Sigmoid colon (tissue), 7 donors: ENCODE measurements at regions of chr22 and their contacts with region 1.

Region 1: GRCh38 chr22:39003165-39003638 is 10.9 kb upstream of the APOBEC3C start:
- DNase-seq: peak; percentile 86
- H3K4me3 ChIP-seq: no peak overlapping the region
- H3K27ac ChIP-seq: no peak overlapping the region
- H3K4me1 ChIP-seq: peaks cover 0 to 8% (median 2%) of the 10 kb centered on the region in 4 donors
- H3K27me3 ChIP-seq: no peaks in the 10 kb centered on the region
- CTCF ChIP-seq: peak; percentile 53 to 80 (median 70)
- EP300 ChIP-seq: no peak
- POLR2A ChIP-seq: no peak

Region 2: DNA sequence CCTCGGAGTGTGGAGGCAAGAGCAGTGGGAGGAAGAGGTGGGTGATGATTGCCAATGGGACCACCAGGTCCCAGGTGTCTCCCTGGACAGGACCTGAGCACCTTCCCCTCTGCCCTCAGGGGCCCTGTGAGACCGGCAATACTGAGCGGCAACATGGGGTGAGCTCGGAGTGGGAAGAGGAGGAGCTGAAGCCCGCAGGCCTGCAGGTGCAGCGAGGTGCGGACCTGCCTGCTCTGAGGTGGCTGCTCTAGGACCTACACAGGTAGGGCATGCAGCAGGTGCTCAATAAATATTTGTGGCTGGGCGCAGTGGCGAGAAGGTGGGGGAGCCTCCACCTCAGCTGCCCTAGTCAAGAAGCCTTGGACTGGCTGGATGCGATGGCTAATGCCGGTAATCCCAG is 235.2 kb before region 1 on chr22:
- intact Hi-C with region 1: loop called (anchors 2 kb)
- DNase-seq: no peak
- H3K4me3 ChIP-seq: no peak overlapping the region
- H3K27ac ChIP-seq: no peak overlapping the region
- H3K4me1 ChIP-seq: no peaks in the 10 kb centered on the region
- H3K27me3 ChIP-seq: no peaks in the 10 kb centered on the region
- CTCF ChIP-seq: no peak
- EP300 ChIP-seq: no peak
- POLR2A ChIP-seq: no peak

Region 3: DNA sequence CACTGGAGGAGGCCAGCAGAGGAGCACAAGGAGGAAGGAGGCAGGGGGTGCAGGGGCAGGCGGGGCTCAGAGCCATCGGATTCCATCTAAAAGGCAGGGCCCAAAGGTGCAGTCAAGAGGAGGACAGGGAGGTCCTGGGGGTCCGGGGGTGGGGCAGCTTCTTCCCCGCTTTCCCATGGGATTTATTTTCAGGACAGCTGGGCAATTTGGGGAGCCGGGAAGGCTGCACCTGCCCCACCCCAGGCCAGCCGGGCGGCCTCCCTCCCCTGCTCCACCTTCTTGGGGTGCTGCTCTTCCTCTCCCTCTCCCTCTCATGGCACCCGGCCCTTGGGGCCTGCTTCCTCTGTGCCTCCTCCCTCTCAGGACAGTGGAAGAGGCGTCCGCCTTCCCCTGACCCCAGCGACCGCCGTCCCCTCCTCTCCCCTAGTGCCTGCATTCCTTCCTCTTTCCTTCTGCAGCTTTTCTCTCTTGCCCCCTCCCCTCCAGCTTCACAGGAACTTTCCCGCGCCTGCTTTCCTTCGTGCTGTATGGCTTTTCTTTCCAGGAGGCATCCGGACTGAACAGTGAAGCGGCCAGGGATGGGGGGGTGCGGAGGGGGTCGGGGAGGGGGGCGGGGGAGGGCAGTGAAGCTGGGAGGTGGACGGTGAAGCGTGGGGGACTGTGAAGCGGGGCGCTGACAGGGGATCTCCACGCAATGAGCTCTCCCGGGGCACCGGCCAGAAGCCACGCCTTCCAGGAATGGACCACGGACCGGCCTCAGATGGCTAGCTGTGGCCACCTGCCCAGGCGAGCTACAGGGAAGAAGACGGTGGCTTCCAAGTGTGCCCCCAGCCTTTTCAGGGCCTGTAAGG is 120.8 kb after region 1 on chr22:
- intact Hi-C with region 1: loop called (anchors 5 kb)
- DNase-seq: peak; percentile 66
- H3K4me3 ChIP-seq: no peak overlapping the region
- H3K27ac ChIP-seq: no peak overlapping the region
- H3K4me1 ChIP-seq: peaks cover 0 to 8% (median 4%) of the 10 kb centered on the region in 4 donors
- H3K27me3 ChIP-seq: no peaks in the 10 kb centered on the region
- CTCF ChIP-seq: no peak
- EP300 ChIP-seq: no peak
- POLR2A ChIP-seq: no peak